Activated CD8-positive, alpha-beta T cell treated with anti-CD3 and anti-CD28 coated beads, Interleukin-2, amount 10 ng/mL, durations not matched to agents 7 days and 5 days (primary cell): ENCODE measurements at regions of chr17 and their contacts with region 1.

Region 1: GRCh38 chr17:1628856-1629646 is 417 bp upstream of the SLC43A2 start:
- DNase-seq: peak; percentile 94
- ATAC-seq: peak; percentile 85
- H3K4me3 Mint-ChIP-seq: peak overlapping the region; percentile 85
- H3K27ac Mint-ChIP-seq: peak overlapping the region; percentile 78
- H3K4me1 Mint-ChIP-seq: peaks cover 28% of the 10 kb centered on the region
- H3K27me3 Mint-ChIP-seq: peaks cover 22% of the 10 kb centered on the region

Region 2: GRCh38 chr17:1455797-1456599 is 173.1 kb before region 1 on chr17 and contains the start of gene CRK:
- CTCF ChIA-PET with region 1: no interaction called
- POLR2A ChIA-PET with region 1: no interaction called
- DNase-seq: peak; percentile 98
- ATAC-seq: peak; percentile 96
- H3K4me3 Mint-ChIP-seq: peak within 1 kb of the TSS; percentile 89
- H3K27ac Mint-ChIP-seq: peak within 1 kb of the TSS; percentile 93
- H3K4me1 Mint-ChIP-seq: peaks cover 34% of the 10 kb centered on the region
- H3K27me3 Mint-ChIP-seq: peaks cover 15% of the 10 kb centered on the region
- total RNA-seq, gene CRK: 15.7 to 17.7 TPM

Region 3: DNA sequence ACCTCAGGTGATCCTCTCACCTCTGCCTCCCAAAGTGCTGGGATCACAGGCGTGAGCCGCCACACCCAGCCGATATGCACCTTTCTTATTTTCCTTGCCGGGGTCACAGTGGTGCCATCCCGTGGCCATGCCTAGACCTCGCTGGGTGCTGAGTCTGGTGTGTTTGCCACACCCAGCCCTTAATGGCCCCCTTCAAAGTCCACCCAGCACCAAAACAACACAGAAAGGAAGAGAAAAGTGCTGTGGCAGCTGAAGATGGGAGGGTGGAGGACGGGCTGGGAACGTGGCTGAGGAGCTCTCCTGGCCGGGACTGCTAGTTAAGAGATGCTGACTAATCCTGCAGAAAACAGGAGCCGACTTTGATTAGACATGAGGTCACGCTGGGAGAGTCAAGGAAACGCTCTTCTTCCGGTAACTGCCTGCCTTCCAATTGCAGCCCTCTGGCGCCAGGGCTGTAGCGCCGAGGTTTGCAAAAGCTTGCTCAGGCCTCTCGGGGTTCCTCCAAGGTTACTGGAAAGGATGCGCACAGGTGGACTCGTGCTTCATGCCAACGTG is 11.4 kb before region 1 on chr17:
- CTCF ChIA-PET with region 1: interaction called, 12 read pairs
- POLR2A ChIA-PET with region 1: interaction called, 4 read pairs
- DNase-seq: no peak
- ATAC-seq: no peak
- H3K4me3 Mint-ChIP-seq: no peak overlapping the region
- H3K27ac Mint-ChIP-seq: no peak overlapping the region
- H3K4me1 Mint-ChIP-seq: peaks cover 6% of the 10 kb centered on the region
- H3K27me3 Mint-ChIP-seq: no peaks in the 10 kb centered on the region